Caco-2 (cell line): ENCODE measurements at regions of chr10 and their contacts with region 1.

Region 1: GRCh38 chr10:89563861-89564478 is 28.6 kb upstream of the SLC16A12 start:
- DNase-seq: peak in 1 of 2 experiments; percentile 43
- H3K4me3 ChIP-seq: no peak overlapping the region
- H3K4me3 Mint-ChIP-seq: no peak overlapping the region
- H3K27ac Mint-ChIP-seq: no peak overlapping the region
- H3K4me1 ChIP-seq: peaks cover 5% of the 10 kb centered on the region; the same call in 1 of the 2 replicates
- H3K4me1 Mint-ChIP-seq: peaks cover 8% of the 10 kb centered on the region
- H3K27me3 ChIP-seq: no peaks in the 10 kb centered on the region
- H3K27me3 Mint-ChIP-seq: peaks cover 3% of the 10 kb centered on the region
- CTCF ChIP-seq: peak; percentile 66

Region 2: DNA sequence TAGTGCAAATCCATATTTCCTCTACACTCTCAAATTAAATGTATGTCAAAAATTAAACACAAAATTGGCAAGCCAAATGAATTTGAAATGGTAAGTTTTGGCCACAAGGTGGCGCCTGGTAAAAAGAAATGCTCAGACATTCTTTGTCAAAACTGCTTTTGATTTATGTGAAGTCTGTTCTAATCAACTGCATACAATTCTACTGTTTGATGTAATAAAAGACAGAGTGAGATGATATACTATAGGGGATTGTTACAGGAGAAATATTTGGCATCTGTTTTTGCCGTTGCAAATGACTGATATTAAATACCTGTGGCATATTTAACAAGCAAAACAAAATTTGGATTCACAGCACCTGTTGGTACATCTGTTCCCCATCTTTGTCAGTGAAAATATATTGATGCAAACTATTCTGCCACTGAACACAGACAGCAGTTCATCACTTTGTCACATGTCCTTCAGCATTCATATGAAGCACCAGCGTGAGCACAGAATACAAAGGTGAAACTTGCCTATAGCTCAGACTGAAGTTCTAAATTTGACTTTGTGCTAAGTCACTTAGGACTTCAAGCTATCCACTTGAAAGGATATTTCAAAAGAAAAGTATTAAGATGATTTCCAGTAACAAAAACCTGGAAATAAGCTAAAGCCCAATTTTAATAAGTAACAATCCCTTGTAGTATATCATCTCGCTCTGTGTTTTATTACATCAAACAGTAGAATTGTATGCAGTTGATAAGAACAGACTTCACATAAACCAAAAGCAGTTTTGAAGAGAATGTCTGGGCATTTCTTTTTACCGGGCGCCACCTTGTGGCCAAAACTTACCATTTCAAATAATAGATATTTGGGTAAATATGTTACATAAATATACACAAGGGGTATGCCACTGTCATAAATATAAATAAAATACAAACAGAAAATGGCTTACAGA is 346.6 kb before region 1 on chr10:
- CTCF ChIA-PET with region 1: no interaction called
- POLR2A ChIA-PET with region 1: no interaction called
- intact Hi-C with region 1: loop called (anchors 1 kb)
- DNase-seq: peak in 1 of 2 experiments; percentile 57
- H3K4me3 ChIP-seq: no peak overlapping the region
- H3K4me3 Mint-ChIP-seq: no peak overlapping the region
- H3K27ac Mint-ChIP-seq: no peak overlapping the region
- H3K4me1 ChIP-seq: 0 out of 2 replicates have a peak, but pooled peaks cover 4% of the 10 kb centered on the region
- H3K4me1 Mint-ChIP-seq: no peaks in the 10 kb centered on the region
- H3K27me3 ChIP-seq: no peaks in the 10 kb centered on the region
- H3K27me3 Mint-ChIP-seq: no peaks in the 10 kb centered on the region
- CTCF ChIP-seq: peak; percentile 63 to 64

Region 3: DNA sequence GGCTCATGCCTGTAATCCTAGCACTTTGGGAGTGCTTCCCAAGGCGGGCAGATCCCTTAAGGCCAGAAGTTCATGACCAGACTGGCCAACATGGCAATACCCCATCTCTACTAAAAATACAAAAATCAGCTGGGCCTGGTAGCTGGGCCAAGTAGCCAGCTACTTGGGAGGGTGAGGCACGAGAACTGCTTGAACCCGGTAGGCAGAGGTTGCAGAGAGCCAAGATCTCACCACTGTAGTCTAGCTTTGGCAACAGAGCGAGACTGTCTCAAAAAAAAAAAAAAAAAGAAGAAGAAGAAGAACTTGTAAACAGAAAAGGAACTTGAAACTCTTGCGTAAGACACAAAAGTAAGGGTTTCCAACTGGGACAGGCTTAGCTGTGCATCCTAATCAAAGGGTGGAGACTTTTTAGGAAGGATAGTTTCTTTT is 267.7 kb before region 1 on chr10:
- CTCF ChIA-PET with region 1: no interaction called
- POLR2A ChIA-PET with region 1: no interaction called
- intact Hi-C with region 1: loop called (anchors 10 kb)
- DNase-seq: no peak
- H3K4me3 ChIP-seq: no peak overlapping the region
- H3K4me3 Mint-ChIP-seq: no peak overlapping the region
- H3K27ac Mint-ChIP-seq: no peak overlapping the region
- H3K4me1 ChIP-seq: peaks cover 9% of the 10 kb centered on the region
- H3K4me1 Mint-ChIP-seq: no peaks in the 10 kb centered on the region
- H3K27me3 ChIP-seq: no peaks in the 10 kb centered on the region
- H3K27me3 Mint-ChIP-seq: no peaks in the 10 kb centered on the region
- CTCF ChIP-seq: no peak

Region 4: DNA sequence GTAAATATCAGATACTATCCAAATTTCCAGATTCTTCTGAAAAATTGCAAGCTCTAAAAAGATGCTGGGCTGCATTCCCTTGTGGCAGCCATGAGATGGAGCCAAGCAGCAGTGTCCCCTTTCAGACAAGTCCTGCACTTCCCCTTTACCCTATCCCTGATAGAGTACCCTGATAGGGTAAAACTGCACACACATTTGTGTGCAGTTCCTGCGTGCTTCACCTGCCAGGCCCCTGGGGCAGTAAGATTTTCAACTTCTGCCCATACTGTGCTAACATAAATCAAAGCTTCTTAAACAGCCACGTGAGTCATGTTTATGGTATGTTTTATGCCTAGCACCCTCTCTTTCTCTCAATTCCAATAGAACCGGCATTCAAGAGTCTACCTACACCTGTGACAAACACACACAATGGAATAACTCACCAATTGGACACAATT is 97.4 kb before region 1 on chr10:
- CTCF ChIA-PET with region 1: interaction called, 5 read pairs
- POLR2A ChIA-PET with region 1: no interaction called
- intact Hi-C with region 1: loop called (anchors 1 kb)
- DNase-seq: peak; percentile 37 to 40
- H3K4me3 ChIP-seq: no peak overlapping the region
- H3K4me3 Mint-ChIP-seq: no peak overlapping the region
- H3K27ac Mint-ChIP-seq: no peak overlapping the region
- H3K4me1 ChIP-seq: 0 out of 2 replicates have a peak, but pooled peaks cover 10% of the 10 kb centered on the region
- H3K4me1 Mint-ChIP-seq: peaks cover 6% of the 10 kb centered on the region
- H3K27me3 ChIP-seq: no peaks in the 10 kb centered on the region; the same call in 1 of the 2 replicates
- H3K27me3 Mint-ChIP-seq: no peaks in the 10 kb centered on the region
- CTCF ChIP-seq: peak in 1 of 2 experiments; percentile 72

Region 5: DNA sequence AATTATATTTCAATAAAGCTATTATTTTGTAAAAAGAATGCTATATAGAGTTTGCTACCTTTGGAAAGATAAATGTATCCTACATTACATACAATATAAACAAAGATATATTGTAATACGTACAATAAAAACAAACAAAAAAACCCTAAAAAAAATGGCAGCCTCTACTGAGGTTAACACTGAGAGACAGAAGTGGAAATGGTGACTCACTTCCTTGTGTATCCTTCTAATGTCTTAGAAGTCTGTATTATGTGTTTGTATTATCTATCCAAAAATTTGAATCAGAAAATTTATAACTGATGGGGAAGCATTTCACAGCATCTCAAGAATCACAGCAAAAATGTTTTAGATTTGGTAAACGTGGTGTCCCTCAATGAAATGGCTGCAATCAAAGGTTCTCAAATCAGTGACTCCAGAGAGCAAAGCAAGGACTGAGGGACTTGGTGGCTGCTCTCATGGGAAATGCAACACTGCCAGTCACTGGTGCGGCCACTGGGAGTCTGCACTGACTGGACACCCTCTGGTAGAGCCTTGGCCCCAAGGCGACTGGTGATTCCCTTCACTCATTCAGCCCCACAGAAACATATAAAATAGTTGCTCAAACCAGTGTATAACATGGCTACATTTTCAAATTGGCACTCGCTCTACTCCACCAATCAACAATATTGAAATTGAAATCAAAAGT is 27.3 kb after region 1 on chr10:
- CTCF ChIA-PET with region 1: no interaction called
- POLR2A ChIA-PET with region 1: no interaction called
- intact Hi-C with region 1: no loop called
- DNase-seq: peak; percentile 9 to 40
- H3K4me3 ChIP-seq: no peak overlapping the region
- H3K4me3 Mint-ChIP-seq: no peak overlapping the region
- H3K27ac Mint-ChIP-seq: peak overlapping the region; percentile 27
- H3K4me1 ChIP-seq: peaks cover 13% of the 10 kb centered on the region
- H3K4me1 Mint-ChIP-seq: peaks cover 6% of the 10 kb centered on the region
- H3K27me3 ChIP-seq: no peaks in the 10 kb centered on the region
- H3K27me3 Mint-ChIP-seq: no peaks in the 10 kb centered on the region
- CTCF ChIP-seq: no peak